Adrenal gland (tissue), 19 donors: ENCODE measurements at regions of chr17 and their contacts with region 1.

Region 1: DNA sequence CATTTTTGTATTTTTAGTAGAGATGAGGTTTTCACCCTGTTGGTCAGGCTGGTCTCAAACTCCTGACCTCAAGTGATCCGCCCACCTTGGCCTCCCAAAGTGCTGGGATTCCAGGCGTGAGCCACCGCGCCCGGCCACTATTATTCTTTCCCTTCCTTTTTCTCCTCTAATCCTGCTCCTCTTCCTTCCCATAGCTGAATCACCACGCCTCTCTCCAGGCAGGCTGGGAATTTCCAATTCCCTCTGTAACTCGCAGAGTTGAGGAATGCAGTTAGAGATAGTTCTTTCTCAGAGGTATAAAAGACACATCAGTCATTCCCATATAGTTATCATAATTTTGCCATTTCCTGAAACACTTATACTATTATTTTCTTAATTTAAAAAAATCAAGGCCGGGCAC is 11.2 kb downstream of the METTL16 start:
- DNase-seq: peak in 1 of 7 donors; percentile 27
- H3K4me3 ChIP-seq: no peak overlapping the region
- H3K27ac ChIP-seq: no peak overlapping the region
- H3K4me1 ChIP-seq: no peaks in the 10 kb centered on the region
- H3K27me3 ChIP-seq: no peaks in the 10 kb centered on the region
- CTCF ChIP-seq: no peak
- POLR2A ChIP-seq: no peak

Region 2: DNA sequence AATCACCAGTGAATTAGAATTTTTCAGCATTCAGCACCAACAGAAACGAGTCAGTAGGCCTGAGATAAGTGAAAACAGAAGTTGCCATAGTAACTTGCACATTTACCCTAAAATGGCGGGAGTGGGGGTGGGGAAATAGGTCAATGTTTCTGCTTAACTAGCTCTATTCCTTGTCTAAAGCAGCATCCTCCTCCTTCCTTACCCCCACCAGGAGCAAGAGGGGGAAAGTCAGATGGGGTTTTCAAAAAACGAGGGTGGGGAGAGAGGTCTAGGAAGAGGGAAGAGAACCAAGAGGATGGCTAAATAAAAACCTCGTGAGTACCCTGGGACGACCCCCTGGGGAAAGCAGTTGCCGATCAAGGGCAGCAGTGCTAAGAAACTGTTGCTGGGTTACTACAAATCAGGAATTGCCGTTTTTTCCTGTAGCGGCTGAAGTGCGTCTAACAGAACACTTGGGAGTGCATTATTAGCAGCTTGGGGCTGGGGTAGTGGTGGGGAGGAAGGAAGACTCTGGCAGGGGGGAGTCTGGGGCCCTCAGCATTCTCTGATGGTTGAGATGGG is 65.2 kb before region 1 on chr17:
- intact Hi-C with region 1: loop called in 1 of 2 experiments (anchors 10 kb)
- DNase-seq: no peak
- H3K4me3 ChIP-seq: no peak overlapping the region
- H3K27ac ChIP-seq: peak overlapping the region in 1 of 5 donors; percentile 38
- H3K4me1 ChIP-seq: no peaks in the 10 kb centered on the region
- H3K27me3 ChIP-seq: no peaks in the 10 kb centered on the region
- CTCF ChIP-seq: no peak
- POLR2A ChIP-seq: no peak

Region 3: DNA sequence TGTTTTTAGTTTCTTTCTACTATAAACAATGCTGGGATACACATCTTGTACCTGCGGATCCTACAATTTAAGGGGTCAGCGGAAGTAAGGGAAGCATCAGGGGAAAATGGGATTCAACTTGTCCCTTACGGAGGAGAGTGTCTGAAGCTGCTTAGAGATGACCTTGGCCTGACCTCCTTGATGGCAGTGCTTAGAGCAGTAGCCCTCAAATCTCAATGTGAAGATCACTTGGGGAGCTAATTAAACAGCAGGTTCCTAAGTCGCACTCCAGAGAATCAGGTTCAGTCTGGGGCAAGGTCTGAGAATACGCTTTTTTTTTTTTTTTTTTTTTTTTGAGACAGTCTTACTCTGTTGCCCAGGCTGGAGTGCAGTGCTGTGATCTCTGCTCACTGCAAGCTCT is 20.8 kb after region 1 on chr17:
- intact Hi-C with region 1: no loop called
- DNase-seq: no peak
- H3K4me3 ChIP-seq: no peak overlapping the region
- H3K27ac ChIP-seq: no peak overlapping the region
- H3K4me1 ChIP-seq: no peaks in the 10 kb centered on the region
- H3K27me3 ChIP-seq: no peaks in the 10 kb centered on the region
- CTCF ChIP-seq: no peak
- POLR2A ChIP-seq: no peak